Activated naive CD4-positive, alpha-beta T cell treated with anti-CD3 and anti-CD28 coated beads for 36 hours (primary cell): ENCODE measurements at regions of chr10 and their contacts with region 1.

Region 1: GRCh38 chr10:97334370-97335175 is at the start of gene FRAT2:
- DNase-seq: peak; percentile 87
- H3K4me3 Mint-ChIP-seq: peak within 1 kb of the TSS; percentile 75
- H3K27ac Mint-ChIP-seq: peak within 1 kb of the TSS; percentile 86
- H3K4me1 Mint-ChIP-seq: peaks cover 32% of the 10 kb centered on the region
- H3K27me3 Mint-ChIP-seq: no peaks in the 10 kb centered on the region
- total RNA-seq, gene FRAT2: 5.1 to 5.6 TPM

Region 2: DNA sequence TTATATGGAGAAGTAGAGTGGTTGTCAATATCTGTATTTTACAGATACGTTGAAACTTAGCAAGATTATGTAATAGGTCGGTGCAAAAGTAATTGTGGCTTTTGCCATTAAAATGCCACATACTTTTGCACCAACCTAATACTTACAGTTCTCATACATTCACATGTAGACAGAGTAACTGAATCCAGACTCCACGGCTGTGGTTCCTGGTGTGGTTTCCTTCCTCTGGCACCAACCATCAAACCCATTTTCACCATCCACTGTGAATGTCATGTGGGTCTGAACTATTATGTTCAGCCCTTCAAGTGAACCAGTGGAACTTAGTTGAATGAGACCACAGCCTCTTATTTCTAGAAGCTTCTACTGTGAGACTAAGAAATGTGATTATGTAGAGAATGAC is 117.3 kb before region 1 on chr10:
- CTCF ChIA-PET with region 1: no interaction called
- intact Hi-C with region 1: loop called (anchors 5 kb)
- DNase-seq: no peak
- H3K4me3 Mint-ChIP-seq: no peak overlapping the region
- H3K27ac Mint-ChIP-seq: no peak overlapping the region
- H3K4me1 Mint-ChIP-seq: peaks cover 31% of the 10 kb centered on the region
- H3K27me3 Mint-ChIP-seq: no peaks in the 10 kb centered on the region

Region 3: DNA sequence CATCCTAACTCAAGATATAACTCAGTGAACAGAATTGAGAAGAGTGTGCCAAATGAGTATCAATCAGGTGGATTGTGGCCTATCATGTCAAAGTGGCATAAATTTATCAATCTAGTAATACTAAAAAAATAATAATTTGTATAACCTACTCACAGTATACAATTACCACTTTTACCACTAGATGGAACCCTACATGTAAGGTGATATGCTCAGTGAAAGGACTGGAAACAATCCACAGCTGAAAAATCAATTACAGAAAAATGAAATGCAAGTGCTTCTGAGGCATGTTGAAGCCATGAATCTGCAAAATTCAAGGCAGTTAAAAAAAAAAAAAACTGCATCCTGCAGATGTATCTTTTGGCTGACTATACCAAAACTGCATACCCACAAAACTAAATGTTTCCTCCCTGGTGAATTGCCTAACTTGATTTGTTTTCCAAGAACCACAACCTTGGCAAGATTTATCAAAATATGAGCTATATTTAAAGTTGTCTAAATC is 56.0 kb before region 1 on chr10:
- CTCF ChIA-PET with region 1: interaction called, 39 read pairs
- intact Hi-C with region 1: loop called (anchors 2 kb)
- DNase-seq: no peak
- H3K4me3 Mint-ChIP-seq: no peak overlapping the region
- H3K27ac Mint-ChIP-seq: no peak overlapping the region
- H3K4me1 Mint-ChIP-seq: peaks cover 12% of the 10 kb centered on the region
- H3K27me3 Mint-ChIP-seq: no peaks in the 10 kb centered on the region

Region 4: DNA sequence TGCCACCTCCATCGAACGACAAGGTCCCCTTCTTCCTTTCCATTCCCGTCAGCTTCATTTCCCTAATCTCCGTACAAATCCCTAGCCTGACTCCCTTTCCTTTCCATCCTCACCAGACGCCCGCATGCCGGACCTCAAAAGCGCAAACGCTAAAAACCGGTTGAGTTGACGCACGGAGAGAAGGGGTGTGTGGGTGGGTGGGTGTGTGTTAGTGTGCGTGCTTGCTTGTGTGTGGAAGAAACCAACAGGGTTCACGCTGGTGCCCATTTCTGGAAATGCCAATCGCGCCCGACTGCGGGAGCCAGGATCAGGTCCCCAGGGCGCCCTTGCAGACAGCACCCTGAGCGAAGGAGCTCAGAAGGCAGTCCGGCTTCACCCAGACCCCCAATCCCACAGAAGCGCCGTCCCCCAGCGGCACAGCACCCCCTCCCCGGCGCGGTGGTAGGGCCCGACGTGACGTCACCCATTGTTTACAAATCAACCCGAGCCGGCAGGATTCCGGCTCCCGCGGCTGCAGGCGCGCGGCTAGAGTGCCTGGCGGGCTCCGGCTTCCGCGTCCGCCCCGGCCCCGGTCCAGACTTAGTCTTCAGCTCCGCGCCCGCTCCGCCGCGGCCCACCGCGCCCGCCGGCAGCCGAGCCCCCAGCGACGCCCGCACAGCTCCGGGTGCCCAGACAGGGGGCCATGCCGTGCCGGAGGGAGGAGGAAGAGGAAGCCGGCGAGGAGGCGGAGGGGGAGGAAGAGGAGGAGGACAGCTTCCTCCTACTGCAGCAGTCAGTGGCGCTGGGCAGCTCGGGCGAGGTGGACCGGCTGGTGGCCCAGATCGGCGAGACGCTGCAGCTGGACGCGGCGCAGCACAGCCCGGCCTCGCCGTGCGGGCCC is 15.6 kb before region 1 on chr10 and contains the start of gene FRAT1:
- CTCF ChIA-PET with region 1: interaction called, 13 read pairs
- intact Hi-C with region 1: loop called (anchors 1 kb)
- DNase-seq: peak; percentile 89
- H3K4me3 Mint-ChIP-seq: peak within 1 kb of the TSS; percentile 87
- H3K27ac Mint-ChIP-seq: peak within 1 kb of the TSS; percentile 95
- H3K4me1 Mint-ChIP-seq: peaks cover 23% of the 10 kb centered on the region
- H3K27me3 Mint-ChIP-seq: no peaks in the 10 kb centered on the region
- total RNA-seq, gene FRAT1: 2.3 to 3.0 TPM

Region 5: GRCh38 chr10:97412891-97413304 is 78.3 kb after region 1 on chr10:
- CTCF ChIA-PET with region 1: no interaction called
- intact Hi-C with region 1: loop called (anchors 2 kb)
- DNase-seq: peak; percentile 88
- H3K4me3 Mint-ChIP-seq: peak overlapping the region; percentile 49
- H3K27ac Mint-ChIP-seq: peak overlapping the region; percentile 87
- H3K4me1 Mint-ChIP-seq: peaks cover 52% of the 10 kb centered on the region
- H3K27me3 Mint-ChIP-seq: no peaks in the 10 kb centered on the region

Region 6: GRCh38 chr10:97640174-97640867 is 305.7 kb after region 1 on chr10 and contains the start of gene PI4K2A:
- CTCF ChIA-PET with region 1: interaction called, 3 read pairs
- intact Hi-C with region 1: loop called (anchors 5 kb)
- DNase-seq: peak; percentile 100
- H3K4me3 Mint-ChIP-seq: peak within 1 kb of the TSS; percentile 93
- H3K27ac Mint-ChIP-seq: peak within 1 kb of the TSS; percentile 73
- H3K4me1 Mint-ChIP-seq: peaks cover 18% of the 10 kb centered on the region
- H3K27me3 Mint-ChIP-seq: no peaks in the 10 kb centered on the region
- total RNA-seq, gene PI4K2A: 8.9 to 9.4 TPM

Region 7: GRCh38 chr10:98567391-98568133 is 1233.0 kb after region 1 on chr10:
- CTCF ChIA-PET with region 1: no interaction called
- intact Hi-C with region 1: no loop called
- DNase-seq: no peak
- H3K4me3 Mint-ChIP-seq: no peak overlapping the region
- H3K27ac Mint-ChIP-seq: no peak overlapping the region
- H3K4me1 Mint-ChIP-seq: no peaks in the 10 kb centered on the region
- H3K27me3 Mint-ChIP-seq: peaks cover 11% of the 10 kb centered on the region